Activated B cell treated with CpG ODN at 0.5 μM for 24 hours (primary cell): ENCODE measurements at regions of chr21 and their contacts with region 1.

Region 1: DNA sequence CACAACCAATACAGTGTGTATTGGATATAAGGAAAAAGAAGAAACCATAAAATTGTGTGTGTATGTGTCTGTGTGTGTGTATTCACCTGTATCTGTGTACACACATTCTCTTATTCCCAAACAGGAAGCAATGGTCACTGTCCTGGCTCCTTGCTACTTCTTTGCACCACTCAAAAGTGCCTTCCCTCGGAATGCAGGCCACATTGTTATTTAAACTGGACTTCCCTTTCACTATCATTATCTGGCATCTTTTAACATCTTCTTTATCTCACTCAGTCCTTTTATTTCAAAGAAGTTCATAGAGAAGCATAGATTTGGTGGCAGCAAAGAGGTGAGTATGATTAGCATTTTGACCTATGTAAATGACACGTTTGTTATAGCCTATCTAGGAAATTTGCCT is 803.7 kb downstream of the NCAM2 start:
- DNase-seq: no peak
- ATAC-seq: no peak
- H3K4me3 Mint-ChIP-seq: no peak overlapping the region
- H3K27ac Mint-ChIP-seq: no peak overlapping the region
- H3K4me1 Mint-ChIP-seq: no peaks in the 10 kb centered on the region
- H3K27me3 Mint-ChIP-seq: no peaks in the 10 kb centered on the region
- CTCF ChIP-seq: no peak

Region 2: DNA sequence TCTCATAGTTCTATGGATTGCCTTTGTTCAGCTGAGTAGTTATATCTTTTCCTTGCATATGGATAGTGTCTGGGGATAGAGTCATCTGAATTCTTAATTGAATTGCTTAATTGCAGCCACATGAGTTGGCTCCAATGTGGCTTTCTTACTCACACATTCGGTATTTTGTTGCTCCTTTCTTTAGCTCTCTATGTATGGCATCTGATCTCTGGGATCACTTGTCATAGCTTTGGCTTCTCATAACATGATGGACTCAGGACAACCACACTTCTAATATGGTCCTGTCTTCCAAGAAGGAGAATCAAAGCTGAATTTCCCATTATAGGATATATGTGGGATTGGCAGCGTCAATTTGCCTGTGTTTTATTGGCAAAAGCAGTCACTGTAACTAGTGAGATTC is 87.5 kb before region 1 on chr21:
- CTCF ChIA-PET with region 1: no interaction called
- POLR2A ChIA-PET with region 1: no interaction called
- intact Hi-C with region 1: no loop called
- DNase-seq: no peak
- ATAC-seq: no peak
- H3K4me3 Mint-ChIP-seq: no peak overlapping the region
- H3K27ac Mint-ChIP-seq: no peak overlapping the region
- H3K4me1 Mint-ChIP-seq: no peaks in the 10 kb centered on the region
- H3K27me3 Mint-ChIP-seq: no peaks in the 10 kb centered on the region
- CTCF ChIP-seq: no peak

Region 3: GRCh38 chr21:21767276-21767675 is 34.6 kb before region 1 on chr21:
- CTCF ChIA-PET with region 1: no interaction called
- POLR2A ChIA-PET with region 1: no interaction called
- intact Hi-C with region 1: loop called (anchors 1 kb)
- DNase-seq: no peak
- ATAC-seq: no peak
- H3K4me3 Mint-ChIP-seq: no peak overlapping the region
- H3K27ac Mint-ChIP-seq: no peak overlapping the region
- H3K4me1 Mint-ChIP-seq: no peaks in the 10 kb centered on the region
- H3K27me3 Mint-ChIP-seq: no peaks in the 10 kb centered on the region
- CTCF ChIP-seq: no peak